ENCODE measurements at regions of chr12 and their contacts with region 1.

Region 1: GRCh38 chr12:100142851-100143559 is at the start of gene BLTP3B:
- DNase-seq: peak; percentile 82
- H3K4me3 Mint-ChIP-seq: peak within 1 kb of the TSS; percentile 94
- H3K27ac Mint-ChIP-seq: peak within 1 kb of the TSS; percentile 98
- H3K4me1 Mint-ChIP-seq: peaks cover 36% of the 10 kb centered on the region
- H3K27me3 Mint-ChIP-seq: no peaks in the 10 kb centered on the region
- total RNA-seq, gene BLTP3B: 69.0 and 73.2 TPM in 2 replicates

Region 2: GRCh38 chr12:99901181-99901580 is 241.8 kb before region 1 on chr12:
- intact Hi-C with region 1: no loop called
- DNase-seq: no peak
- H3K4me3 Mint-ChIP-seq: no peak overlapping the region
- H3K27ac Mint-ChIP-seq: no peak overlapping the region
- H3K4me1 Mint-ChIP-seq: no peaks in the 10 kb centered on the region
- H3K27me3 Mint-ChIP-seq: no peaks in the 10 kb centered on the region

Region 3: GRCh38 chr12:100101000-100101399 is 42.0 kb before region 1 on chr12:
- intact Hi-C with region 1: loop called (anchors 1 kb)
- DNase-seq: no peak
- H3K4me3 Mint-ChIP-seq: no peak overlapping the region
- H3K27ac Mint-ChIP-seq: peak overlapping the region; percentile 69
- H3K4me1 Mint-ChIP-seq: peaks cover 11% of the 10 kb centered on the region
- H3K27me3 Mint-ChIP-seq: no peaks in the 10 kb centered on the region

Measured in activated T-helper 2 cell treated with anti-CD3 and anti-CD28 coated beads, Interferon-gamma antibody, Interleukin-2, Interleukin-4, amounts not matched to agents 10 μg/mL and 5 μg/mL and 100 μg/mL, durations not matched to agents 14 hours and 24 hours and 36 hours (primary cell).